ENCODE measurements at regions of chr18 and their contacts with region 1.

Region 1: DNA sequence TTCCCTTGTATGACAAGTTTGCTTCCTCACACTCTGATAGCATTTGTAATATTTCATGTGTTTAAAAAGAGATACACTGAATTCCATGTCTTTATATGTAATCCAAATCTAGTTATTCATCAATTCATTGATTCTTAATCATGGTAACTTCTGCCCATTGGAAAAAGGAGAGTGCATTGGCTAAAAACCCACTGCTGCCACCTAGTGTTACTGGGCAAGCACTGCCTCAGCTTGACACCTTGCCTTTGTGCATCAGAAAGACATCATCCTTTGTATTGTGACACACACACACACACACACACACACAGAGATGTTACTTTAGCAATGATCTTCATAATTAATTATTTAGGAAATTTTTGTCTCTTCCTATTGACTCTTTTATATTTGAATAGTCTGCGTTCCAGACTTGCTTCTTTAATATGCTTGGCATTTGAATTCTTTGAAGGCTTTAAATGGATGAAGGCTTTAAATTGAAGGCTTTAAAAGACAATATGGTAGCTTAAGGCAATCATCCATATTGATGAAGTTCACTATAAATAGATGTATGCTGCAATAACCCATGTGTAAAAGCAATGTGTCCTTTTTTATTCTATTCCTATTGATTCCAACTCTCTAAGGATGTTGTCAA is 414.2 kb upstream of the CHST9 start:
- DNase-seq: peak; percentile 33
- H3K4me3 ChIP-seq: no peak overlapping the region
- H3K27ac ChIP-seq: no peak overlapping the region
- H3K4me1 ChIP-seq: no peaks in the 10 kb centered on the region
- H3K27me3 ChIP-seq: peaks cover 0 to 2% of the 10 kb centered on the region in 2 experiments
- CTCF ChIP-seq: peak; percentile 84 to 86
- POLR2A ChIP-seq: no peak

Region 2: DNA sequence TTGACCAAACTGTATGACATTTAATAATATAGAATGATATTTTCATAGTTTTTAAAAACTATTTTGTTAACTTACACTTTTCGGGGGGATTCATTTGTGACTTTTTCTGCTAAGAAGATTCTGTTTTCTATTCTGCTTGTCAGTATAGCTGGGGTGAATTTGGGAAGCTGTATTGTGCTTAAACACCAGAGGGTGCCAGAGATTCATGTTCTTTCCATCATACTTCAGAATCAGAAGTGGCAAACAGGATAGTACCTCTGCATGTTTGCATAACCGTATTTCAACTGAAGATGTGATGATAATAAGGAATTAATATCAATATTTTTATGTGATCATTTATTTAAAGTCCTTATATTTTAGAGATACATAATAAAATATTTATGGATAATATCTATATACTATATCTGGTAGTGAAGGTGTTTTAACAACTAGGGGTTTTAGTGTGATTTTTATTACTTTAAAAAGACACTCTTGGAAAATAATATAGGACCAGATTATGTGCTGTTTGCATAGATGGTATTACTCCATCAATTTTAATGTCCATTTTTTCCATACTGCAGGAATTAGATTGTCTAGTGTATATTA is 1292.0 kb before region 1 on chr18:
- CTCF ChIA-PET with region 1: interaction called, 40 read pairs
- POLR2A ChIA-PET with region 1: no interaction called
- dilution Hi-C with region 1: no loop called
- intact Hi-C with region 1: loop called (anchors 2 kb)
- DNase-seq: peak; percentile 70
- H3K4me3 ChIP-seq: no peak overlapping the region
- H3K27ac ChIP-seq: no peak overlapping the region
- H3K4me1 ChIP-seq: peaks cover 3% of the 10 kb centered on the region
- H3K27me3 ChIP-seq: no peaks in the 10 kb centered on the region
- CTCF ChIP-seq: peak; percentile 43 to 57
- POLR2A ChIP-seq: no peak

Region 3: DNA sequence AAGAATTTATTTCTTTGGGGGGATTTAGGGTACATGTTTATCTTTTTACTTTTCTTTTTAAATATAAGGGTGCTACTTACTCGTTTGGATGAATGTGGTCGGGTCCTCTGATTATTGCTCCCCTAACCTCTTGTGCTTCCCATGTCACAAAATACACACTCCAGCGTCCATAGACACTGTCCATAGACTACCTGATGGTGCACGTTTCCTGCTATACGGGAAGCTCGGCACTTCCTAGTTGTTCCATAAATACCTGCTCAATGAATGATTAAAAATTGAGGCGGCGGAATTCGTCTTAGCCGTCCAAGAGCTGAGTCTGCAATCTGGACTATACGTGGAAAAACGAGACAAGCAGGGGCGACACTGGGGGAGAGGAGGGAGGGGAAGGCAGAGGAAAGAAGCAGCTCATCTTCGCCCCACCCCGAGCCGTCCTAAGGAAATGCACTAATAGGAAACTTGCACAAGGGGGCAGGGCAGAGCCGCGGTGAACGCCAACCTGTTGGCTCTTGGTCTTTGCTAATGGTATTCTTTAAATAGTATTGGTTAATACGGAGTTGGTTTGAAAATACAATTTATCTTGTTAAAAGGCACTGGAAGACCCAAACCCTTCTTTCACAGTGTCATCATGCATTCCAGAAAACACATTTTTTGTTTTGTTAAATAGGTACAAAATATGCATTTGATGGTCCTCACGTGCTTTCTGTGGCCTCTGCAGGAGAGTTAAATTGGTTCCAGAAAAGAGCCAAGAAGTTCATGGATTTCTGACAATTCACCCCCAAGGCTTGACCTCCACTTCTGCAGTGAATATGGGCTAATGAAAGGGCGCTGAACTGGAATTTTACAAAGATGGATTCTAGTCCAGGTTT is 977.9 kb before region 1 on chr18:
- CTCF ChIA-PET with region 1: interaction called, 18 read pairs
- POLR2A ChIA-PET with region 1: no interaction called
- dilution Hi-C with region 1: no loop called
- intact Hi-C with region 1: no loop called
- DNase-seq: peak; percentile 15
- H3K4me3 ChIP-seq: no peak overlapping the region
- H3K27ac ChIP-seq: no peak overlapping the region
- H3K4me1 ChIP-seq: no peaks in the 10 kb centered on the region
- H3K27me3 ChIP-seq: no peaks in the 10 kb centered on the region
- CTCF ChIP-seq: peak; percentile 31 to 56
- POLR2A ChIP-seq: no peak

Region 4: DNA sequence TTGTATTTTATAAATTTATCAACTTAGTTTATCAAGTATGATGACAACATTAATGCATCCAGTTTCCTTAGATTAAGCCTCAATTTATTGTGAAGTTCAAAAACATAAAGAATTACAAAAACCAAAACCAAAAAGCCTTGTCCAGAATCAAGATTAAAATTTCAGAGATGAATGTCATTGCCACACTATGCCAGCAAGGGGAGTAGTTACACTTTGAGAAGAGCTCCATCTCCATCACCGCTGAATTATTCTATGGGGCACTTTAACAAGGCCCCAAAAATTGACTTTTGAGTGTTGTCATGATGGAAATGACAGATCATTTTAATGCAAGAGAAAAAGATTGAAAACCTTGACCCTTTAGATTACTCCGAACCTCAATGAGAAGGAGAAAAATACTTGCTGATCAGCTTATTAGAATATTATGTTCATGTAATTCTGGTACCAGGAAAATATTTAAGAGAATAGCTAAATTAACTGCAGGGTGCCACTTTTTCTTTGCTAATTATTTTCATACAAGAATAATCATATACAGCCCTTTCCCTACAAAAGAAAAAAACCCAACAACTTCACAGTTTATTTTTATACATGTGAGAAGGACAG is 581.3 kb before region 1 on chr18:
- CTCF ChIA-PET with region 1: no interaction called
- POLR2A ChIA-PET with region 1: no interaction called
- dilution Hi-C with region 1: no loop called
- intact Hi-C with region 1: loop called (anchors 5 kb)
- DNase-seq: no peak
- H3K4me3 ChIP-seq: no peak overlapping the region
- H3K27ac ChIP-seq: no peak overlapping the region
- H3K4me1 ChIP-seq: no peaks in the 10 kb centered on the region
- H3K27me3 ChIP-seq: no peaks in the 10 kb centered on the region
- CTCF ChIP-seq: no peak
- POLR2A ChIP-seq: no peak

Region 5: GRCh38 chr18:27363872-27364271 is 235.4 kb before region 1 on chr18:
- CTCF ChIA-PET with region 1: no interaction called
- POLR2A ChIA-PET with region 1: no interaction called
- dilution Hi-C with region 1: no loop called
- intact Hi-C with region 1: loop called (anchors 2 kb)
- DNase-seq: no peak
- H3K4me3 ChIP-seq: no peak overlapping the region
- H3K27ac ChIP-seq: no peak overlapping the region
- H3K4me1 ChIP-seq: no peaks in the 10 kb centered on the region
- H3K27me3 ChIP-seq: no peaks in the 10 kb centered on the region
- CTCF ChIP-seq: no peak
- POLR2A ChIP-seq: no peak

Measured in endothelial cell of umbilical vein (primary cell).